GM12878 (cell line): ENCODE measurements at regions of chr7 and their contacts with region 1.

Region 1: DNA sequence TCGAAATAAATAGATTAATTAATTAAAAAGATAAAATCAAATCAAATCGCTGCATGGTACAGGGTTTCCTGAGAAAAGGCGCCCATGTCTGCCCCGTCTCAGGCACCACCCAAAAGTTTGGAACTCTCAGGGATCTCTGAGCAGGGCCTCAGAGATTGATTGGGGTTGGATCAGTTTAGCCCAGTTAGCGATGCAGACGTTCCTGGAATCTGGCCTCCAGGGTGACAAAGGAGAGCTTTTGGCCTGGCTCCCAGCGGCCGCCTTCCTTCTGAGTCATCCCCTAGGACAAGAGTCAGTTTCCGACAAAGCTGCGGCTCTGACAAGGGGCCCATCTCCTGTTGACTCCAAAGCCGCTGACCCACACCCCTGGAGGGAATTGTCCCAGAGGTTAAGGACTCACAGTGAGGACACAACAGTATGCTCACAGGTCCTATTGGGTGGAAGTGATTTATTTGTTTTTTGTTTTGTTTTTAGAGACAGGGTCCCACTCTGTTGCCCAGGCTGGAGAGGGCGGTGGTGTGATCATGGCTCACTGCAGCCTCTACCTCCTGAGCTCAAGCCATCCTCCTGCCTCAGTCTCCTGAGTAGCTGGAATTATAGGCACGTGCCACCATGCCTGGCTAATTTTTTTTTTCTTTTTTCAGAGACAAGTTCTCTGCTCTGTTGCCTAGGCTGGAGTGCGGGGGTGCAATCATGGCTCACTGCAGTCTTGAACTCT is 6.9 kb downstream of the ORAI2 start:
- DNase-seq: no peak
- ATAC-seq: no peak
- H3K4me3 ChIP-seq: no peak overlapping the region
- H3K27ac ChIP-seq: peak overlapping the region; percentile 99; the same call in 1 of the 2 replicates
- H3K4me1 ChIP-seq: peaks cover 44% of the 10 kb centered on the region
- H3K27me3 ChIP-seq: no peaks in the 10 kb centered on the region
- CTCF ChIP-seq: no peak
- EP300 ChIP-seq: no peak
- POLR2A ChIP-seq: no peak
- RAD21 ChIP-seq: no peak

Region 2: DNA sequence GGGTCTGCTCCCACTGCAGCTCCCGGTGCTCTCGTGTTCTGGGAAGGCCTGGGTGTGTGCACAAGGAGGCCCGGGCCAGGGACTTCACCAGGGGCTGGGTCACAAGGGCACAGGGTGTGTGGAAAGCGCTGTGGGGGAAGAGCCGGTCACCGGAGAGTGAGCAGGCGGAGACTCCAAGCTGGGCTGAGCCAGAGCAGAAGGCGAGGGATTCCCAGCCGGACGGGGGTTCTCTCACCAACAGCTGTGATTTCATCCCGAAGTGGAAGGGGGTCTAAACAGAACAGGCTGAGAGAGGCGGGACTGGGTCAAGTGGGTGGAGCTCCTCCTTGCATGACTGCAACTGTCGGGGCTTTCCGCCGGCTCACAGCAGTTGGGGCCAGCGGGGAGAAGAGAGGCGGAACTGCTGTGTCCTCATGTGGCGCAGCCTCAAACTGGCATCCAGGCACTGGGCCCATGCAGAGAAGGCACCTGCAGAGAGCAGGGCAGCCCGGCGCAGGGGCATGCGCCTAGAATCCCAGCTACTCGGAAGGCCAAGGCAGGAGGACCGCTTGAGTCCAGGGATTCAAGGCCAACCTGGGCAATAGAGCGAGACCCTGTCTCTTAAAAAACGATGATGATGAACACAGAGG is 14.5 kb before region 1 on chr7:
- CTCF ChIA-PET with region 1: interaction called, 11 read pairs
- POLR2A ChIA-PET with region 1: interaction called, 210 read pairs
- RAD21 ChIA-PET with region 1: interaction called, 115 read pairs
- SMC1A ChIA-PET with region 1: interaction called, 37 read pairs
- in situ Hi-C with region 1: no loop called
- intact Hi-C with region 1: loop called (anchors 1 kb)
- DNase-seq: peak; percentile 84
- ATAC-seq: peak; percentile 84
- H3K4me3 ChIP-seq: peak overlapping the region; percentile 51; the same call in 1 of the 2 replicates
- H3K27ac ChIP-seq: peak overlapping the region; percentile 99
- H3K4me1 ChIP-seq: peaks cover 53% of the 10 kb centered on the region
- H3K27me3 ChIP-seq: no peaks in the 10 kb centered on the region
- CTCF ChIP-seq: no peak
- EP300 ChIP-seq: peak; percentile 78 to 86; a peak in 3 of 4 replicates
- POLR2A ChIP-seq: peak; percentile 91
- RAD21 ChIP-seq: no peak